Activated CD8-positive, alpha-beta memory T cell treated with anti-CD3 and anti-CD28 coated beads, Interleukin-2, amount 10 ng/mL, durations not matched to agents 7 days and 5 days (primary cell): ENCODE measurements at regions of chr19 and their contacts with region 1.

Region 1: GRCh38 chr19:4342615-4343369 is 570 bp upstream of the MPND start:
- DNase-seq: peak; percentile 97
- ATAC-seq: peak; percentile 89
- H3K4me3 Mint-ChIP-seq: peak overlapping the region; percentile 85
- H3K27ac Mint-ChIP-seq: peak overlapping the region; percentile 92
- H3K4me1 Mint-ChIP-seq: peaks cover 32% of the 10 kb centered on the region
- H3K27me3 Mint-ChIP-seq: no peaks in the 10 kb centered on the region

Region 2: DNA sequence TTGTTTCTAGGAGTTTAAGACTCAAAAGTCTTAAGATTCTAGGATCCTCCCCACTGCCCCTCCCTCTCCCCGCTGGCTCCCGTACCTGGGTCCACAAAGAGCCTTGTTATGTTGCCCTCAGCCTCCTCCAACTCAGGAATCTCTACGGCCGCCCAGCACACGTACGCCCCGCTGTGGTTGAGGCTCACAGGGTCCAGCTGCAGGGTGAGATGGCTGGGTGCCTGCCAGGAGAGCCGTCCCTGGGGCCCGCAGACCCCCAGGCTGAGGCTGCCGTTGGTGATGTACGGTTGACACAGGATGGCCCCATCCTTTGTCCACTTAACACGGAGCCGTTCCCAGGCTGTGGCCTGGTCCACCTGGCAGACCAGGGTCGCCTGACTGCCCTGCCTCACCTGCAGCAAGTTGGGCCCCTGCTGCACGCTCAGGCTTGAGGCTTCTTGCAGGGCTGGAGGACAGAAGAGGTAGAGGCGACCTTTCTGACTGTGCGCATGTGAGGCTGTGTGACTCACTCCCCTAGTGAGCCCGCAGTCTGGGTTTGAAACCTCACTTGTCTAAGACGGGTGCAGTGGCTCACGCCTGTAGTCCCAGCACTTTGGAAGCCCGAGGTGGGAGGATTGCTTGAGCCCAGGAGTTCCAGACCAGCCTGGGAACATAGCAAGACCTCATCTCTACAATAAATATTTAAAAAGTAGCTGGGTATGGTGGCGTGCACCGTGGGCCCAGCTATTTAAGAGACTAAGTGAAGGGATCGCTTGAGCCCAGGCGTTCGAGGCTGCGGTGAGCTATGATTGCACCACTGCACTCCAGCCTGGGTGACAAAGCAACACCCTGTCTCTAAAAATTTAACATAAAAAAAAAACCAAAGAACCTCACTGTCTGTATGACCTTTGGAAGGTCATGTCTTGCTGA is 44.6 kb before region 1 on chr19:
- CTCF ChIA-PET with region 1: interaction called, 13 read pairs
- DNase-seq: peak; percentile 82
- ATAC-seq: peak; percentile 84
- H3K4me3 Mint-ChIP-seq: peak overlapping the region; percentile 46
- H3K27ac Mint-ChIP-seq: peak overlapping the region; percentile 78
- H3K4me1 Mint-ChIP-seq: peaks cover 36% of the 10 kb centered on the region
- H3K27me3 Mint-ChIP-seq: no peaks in the 10 kb centered on the region

Region 3: GRCh38 chr19:4369888-4370260 is 27.1 kb after region 1 on chr19:
- CTCF ChIA-PET with region 1: interaction called, 15 read pairs
- DNase-seq: peak; percentile 89
- ATAC-seq: peak; percentile 80
- H3K4me3 Mint-ChIP-seq: peak overlapping the region; percentile 66
- H3K27ac Mint-ChIP-seq: peak overlapping the region; percentile 93
- H3K4me1 Mint-ChIP-seq: peaks cover 60% of the 10 kb centered on the region
- H3K27me3 Mint-ChIP-seq: no peaks in the 10 kb centered on the region